ENCODE measurements at regions of chr1 and their contacts with region 1.

Region 1: DNA sequence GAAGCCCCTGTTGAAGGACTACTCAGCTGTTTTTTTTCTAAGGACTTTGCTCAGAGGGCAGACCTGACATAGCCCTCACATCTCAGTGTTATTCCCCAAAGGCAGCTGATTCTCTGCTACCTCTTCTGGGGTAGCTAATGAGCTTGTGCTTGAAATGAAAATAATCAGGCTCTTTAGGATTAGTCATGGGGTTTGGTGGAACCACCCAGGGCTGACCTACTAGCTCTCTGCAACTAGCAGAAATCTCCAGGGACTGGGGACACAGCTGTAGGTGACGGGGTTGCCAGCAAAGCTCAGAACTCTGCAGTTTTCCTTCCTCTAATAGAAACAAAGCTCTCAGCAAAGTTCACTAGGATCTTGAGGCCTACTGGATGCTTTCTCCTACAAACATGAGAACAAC is 106.4 kb upstream of the BCL9 start:
- DNase-seq: no peak
- ATAC-seq: no peak
- H3K4me3 ChIP-seq: no peak overlapping the region
- H3K27ac ChIP-seq: no peak overlapping the region
- H3K4me1 ChIP-seq: no peaks in the 10 kb centered on the region
- H3K27me3 ChIP-seq: peaks cover 0 to 3% (median 0%) of the 10 kb centered on the region in 7 donors
- CTCF ChIP-seq: no peak

Region 2: GRCh38 chr1:147109041-147109440 is 325.9 kb before region 1 on chr1:
- intact Hi-C with region 1: no loop called
- DNase-seq: no peak
- ATAC-seq: no peak
- H3K4me3 ChIP-seq: no peak overlapping the region
- H3K27ac ChIP-seq: no peak overlapping the region
- H3K4me1 ChIP-seq: no peaks in the 10 kb centered on the region
- H3K27me3 ChIP-seq: peaks cover 0 to 27% (median 4%) of the 10 kb centered on the region in 7 donors
- CTCF ChIP-seq: no peak

Region 3: DNA sequence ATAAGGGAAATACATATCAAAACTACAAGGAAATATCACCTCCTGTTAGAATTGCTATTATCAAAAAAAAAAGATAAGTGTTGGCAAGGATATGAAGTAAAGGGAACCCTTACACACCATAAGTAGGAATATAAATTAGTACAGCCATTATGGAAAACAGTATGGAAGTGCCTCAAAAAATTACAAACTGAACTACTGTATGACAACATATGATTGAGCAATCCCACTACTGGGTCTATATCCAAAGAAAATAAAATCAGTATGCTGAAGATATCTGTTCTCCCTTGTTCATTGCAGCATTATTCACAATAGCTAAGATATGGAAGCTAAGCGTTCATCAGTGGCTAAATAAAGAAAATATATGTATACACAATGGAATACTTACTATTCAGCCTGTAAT is 132.6 kb before region 1 on chr1:
- intact Hi-C with region 1: no loop called
- DNase-seq: no peak
- ATAC-seq: no peak
- H3K4me3 ChIP-seq: no peak overlapping the region
- H3K27ac ChIP-seq: no peak overlapping the region
- H3K4me1 ChIP-seq: no peaks in the 10 kb centered on the region
- H3K27me3 ChIP-seq: no peaks in the 10 kb centered on the region
- CTCF ChIP-seq: no peak

Region 4: GRCh38 chr1:147452809-147453208 is 17.9 kb after region 1 on chr1:
- intact Hi-C with region 1: loop called in 1 of 10 experiments (anchors 1 kb)
- DNase-seq: no peak
- ATAC-seq: no peak
- H3K4me3 ChIP-seq: no peak overlapping the region
- H3K27ac ChIP-seq: no peak overlapping the region
- H3K4me1 ChIP-seq: no peaks in the 10 kb centered on the region
- H3K27me3 ChIP-seq: no peaks in the 10 kb centered on the region
- CTCF ChIP-seq: no peak

Measured in heart right ventricle (tissue), 16 donors.